Dendritic cell treated with granulocyte-macrophage colony-stimulating factor and Interleukin-4, amounts not matched to agents 40 ng/mL and 50 ng/mL, for 4 days (primary cell): ENCODE measurements at regions of chr6 and their contacts with region 1.

Region 1: DNA sequence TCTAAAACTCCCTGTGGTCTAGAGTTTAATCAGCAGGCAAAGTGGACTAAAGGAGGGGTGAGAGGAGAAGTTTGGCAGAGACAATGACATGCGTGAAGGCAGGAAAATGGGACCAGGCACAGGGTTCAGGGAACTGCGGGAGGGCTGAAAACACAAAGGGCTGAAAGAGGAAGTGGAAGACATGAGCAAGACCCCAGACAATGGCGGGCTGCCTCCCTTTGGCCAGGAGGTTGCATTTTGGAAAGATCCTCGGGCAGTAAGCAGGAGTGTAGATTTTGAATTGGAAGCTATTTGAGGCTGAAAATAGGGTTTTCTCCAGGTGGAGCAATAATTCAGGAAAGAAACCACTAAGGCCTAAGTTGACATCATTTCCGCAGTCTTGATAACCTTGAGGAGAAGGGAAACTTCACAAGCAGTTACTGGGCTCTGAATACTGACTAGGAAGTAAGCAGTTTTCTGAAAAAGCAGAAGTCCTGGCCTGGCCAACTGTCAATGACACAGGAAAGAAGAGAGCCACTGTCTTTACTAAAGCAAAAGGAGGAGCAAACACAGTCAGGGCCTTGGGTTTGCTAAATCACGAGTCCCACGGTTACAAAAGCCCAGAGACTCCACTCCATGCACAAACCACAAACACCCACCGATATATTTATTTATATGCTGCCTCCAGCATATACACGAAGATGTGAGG is 3.4 kb downstream of the LY86 start:
- H3K4me3 Mint-ChIP-seq: peak overlapping the region; percentile 20
- H3K27ac Mint-ChIP-seq: peak overlapping the region; percentile 96
- H3K4me1 Mint-ChIP-seq: peaks cover 98% of the 10 kb centered on the region
- H3K27me3 Mint-ChIP-seq: no peaks in the 10 kb centered on the region

Region 2: GRCh38 chr6:5174244-5174643 is 1417.7 kb before region 1 on chr6:
- intact Hi-C with region 1: no loop called
- H3K4me3 Mint-ChIP-seq: peak overlapping the region; percentile 31
- H3K27ac Mint-ChIP-seq: peak overlapping the region; percentile 65
- H3K4me1 Mint-ChIP-seq: peaks cover 22% of the 10 kb centered on the region
- H3K27me3 Mint-ChIP-seq: no peaks in the 10 kb centered on the region

Region 3: DNA sequence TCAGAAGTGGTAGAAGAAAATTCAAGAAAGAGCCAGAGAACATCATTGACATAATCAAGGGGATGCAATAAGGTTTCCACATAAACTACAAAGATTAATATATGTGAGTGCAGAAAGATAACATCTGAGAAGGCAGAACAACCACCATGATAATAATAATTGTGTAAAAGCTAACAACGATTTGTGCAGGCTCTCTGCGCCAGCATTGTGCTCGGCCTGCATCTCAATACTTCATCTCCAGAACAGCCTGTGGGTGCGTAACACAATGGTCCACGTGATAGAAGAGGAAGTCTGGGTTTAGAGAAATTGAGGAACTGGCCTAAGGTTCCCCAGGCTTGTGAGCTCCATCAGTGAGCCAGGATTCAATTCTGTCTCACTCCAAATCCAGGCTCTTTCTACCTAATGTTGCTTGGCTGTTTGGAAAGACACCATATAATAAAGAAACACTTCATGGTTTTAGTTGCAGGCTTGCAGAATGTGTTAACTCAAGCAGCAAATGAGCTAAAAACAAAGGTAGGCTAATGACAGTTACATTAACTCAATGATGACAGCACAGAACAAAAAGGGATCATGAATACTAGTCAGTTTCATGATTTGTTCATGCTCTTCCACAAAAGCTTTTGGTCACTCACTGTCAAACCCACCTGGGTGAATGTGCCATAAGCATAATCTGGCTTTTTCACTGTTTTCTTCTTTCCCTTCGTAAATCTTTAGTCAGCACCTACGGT is 67.8 kb after region 1 on chr6:
- intact Hi-C with region 1: loop called (anchors 5 kb)
- H3K4me3 Mint-ChIP-seq: no peak overlapping the region
- H3K27ac Mint-ChIP-seq: peak overlapping the region; percentile 89
- H3K4me1 Mint-ChIP-seq: peaks cover 92% of the 10 kb centered on the region
- H3K27me3 Mint-ChIP-seq: no peaks in the 10 kb centered on the region